Activated naive CD8-positive, alpha-beta T cell treated with anti-CD3 and anti-CD28 coated beads, Interleukin-2, amount 10 ng/mL, durations not matched to agents 7 days and 5 days (primary cell): ENCODE measurements at regions of chr17 and their contacts with region 1.

Region 1: DNA sequence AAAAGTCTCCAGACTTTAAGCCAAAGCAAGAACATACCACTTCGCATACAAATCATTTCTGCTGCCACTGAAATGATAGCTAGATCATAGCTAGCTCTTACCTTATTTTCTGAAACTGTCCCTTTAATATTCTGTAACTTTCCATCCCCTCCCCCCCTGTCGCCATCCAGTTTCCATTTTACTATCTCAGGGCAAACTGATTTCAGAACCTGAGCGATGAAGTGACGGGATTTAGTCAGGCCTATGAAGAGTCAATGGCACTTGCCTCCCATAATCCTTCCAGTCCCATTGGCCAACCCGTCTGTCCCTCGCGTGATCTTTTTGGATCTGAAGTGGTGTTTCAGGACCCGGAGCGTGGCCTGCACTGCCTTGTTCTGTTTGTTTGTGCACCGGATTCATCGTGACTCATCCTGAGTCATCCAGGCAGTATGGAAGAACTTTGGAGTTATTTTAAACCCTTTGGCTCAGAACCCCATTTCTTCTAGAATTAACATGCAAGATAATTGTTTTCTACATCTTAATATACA is 199.8 kb upstream of the CHMP6 start:
- DNase-seq: no peak
- ATAC-seq: no peak
- H3K4me3 Mint-ChIP-seq: peak overlapping the region; percentile 76
- H3K27ac Mint-ChIP-seq: peak overlapping the region; percentile 97
- H3K4me1 Mint-ChIP-seq: peaks cover 56% of the 10 kb centered on the region
- H3K27me3 Mint-ChIP-seq: no peaks in the 10 kb centered on the region

Region 2: DNA sequence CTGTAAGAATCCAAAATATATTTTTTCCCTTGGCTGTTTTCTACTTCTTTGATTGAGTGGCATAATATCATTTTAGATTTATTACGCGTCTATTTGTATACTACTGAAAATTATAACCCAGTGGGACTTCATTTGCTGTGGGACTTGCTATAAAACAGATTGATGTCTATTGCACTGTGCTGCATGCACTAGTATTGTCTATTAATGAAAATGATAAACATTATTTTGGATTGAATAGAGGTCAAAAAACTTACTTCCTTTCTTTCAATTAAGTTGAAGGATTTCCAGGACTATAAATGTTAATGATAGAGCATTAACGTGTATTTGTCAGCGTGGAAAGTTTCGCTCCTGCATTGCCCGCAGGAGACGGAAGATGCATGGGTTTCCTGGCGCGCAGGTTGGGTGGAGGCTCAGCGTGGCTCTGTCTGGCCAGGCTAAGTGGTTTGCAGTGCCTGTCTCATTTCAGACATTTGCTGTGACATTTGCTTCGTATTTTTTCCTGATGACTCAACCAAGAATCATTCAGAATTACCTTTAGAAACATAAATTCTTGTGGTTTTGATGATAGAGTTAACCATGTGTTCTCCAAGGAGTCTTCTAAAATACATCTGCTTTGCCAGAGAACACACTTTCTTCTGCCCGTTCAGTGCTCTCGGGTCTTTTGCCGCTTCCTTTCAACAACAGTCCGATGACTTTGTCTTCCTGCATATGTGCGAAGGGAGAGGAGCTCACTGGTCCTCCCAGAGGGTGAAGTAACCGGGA is 30.5 kb before region 1 on chr17:
- POLR2A ChIA-PET with region 1: interaction called, 16 read pairs
- DNase-seq: no peak
- ATAC-seq: peak; percentile 79
- H3K4me3 Mint-ChIP-seq: peak overlapping the region; percentile 76
- H3K27ac Mint-ChIP-seq: peak overlapping the region; percentile 98
- H3K4me1 Mint-ChIP-seq: peaks cover 66% of the 10 kb centered on the region
- H3K27me3 Mint-ChIP-seq: no peaks in the 10 kb centered on the region

Region 3: DNA sequence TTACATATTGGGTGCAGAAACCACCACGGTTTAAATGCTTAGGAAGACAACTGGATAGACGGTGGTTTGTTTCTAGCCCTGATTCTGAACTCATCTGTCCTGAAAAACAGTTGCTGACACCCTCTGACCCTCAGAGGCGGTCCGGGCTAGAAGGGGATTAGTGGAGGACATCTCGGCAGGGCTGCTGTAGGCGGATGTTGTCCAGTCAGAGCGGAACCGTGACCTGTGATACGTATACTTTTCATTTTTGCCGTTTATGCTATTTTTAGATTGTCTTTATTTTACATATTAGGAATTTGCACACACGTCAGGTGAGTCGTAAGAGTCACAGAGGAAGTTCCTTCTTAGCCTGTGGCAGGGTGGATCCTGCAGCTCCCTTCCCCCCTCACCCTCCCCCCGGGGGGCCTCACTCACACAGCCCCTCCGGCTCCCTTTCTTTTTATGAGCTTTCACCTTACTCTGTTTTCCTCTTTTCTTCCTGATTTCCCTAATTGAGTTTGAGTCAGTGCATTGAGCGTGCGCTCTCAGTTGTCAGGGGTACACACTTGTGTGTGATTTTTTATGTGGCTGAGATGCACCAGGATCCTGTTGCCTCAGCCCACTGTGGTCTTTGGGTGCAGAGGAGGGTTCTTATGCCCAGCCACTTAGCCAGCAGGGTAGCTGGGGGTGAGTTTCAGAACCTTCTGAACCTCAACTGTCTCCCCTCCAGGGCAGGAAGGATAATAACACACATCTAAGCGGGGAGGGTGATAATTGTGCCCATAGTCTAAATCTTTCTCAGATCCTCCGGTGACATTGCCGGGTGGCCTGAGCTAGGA is 11.2 kb before region 1 on chr17:
- POLR2A ChIA-PET with region 1: interaction called, 84 read pairs
- DNase-seq: peak; percentile 64
- ATAC-seq: peak; percentile 64
- H3K4me3 Mint-ChIP-seq: peak overlapping the region; percentile 74
- H3K27ac Mint-ChIP-seq: peak overlapping the region; percentile 96
- H3K4me1 Mint-ChIP-seq: peaks cover 63% of the 10 kb centered on the region
- H3K27me3 Mint-ChIP-seq: no peaks in the 10 kb centered on the region

Region 4: GRCh38 chr17:80805032-80805751 is 13.4 kb after region 1 on chr17:
- POLR2A ChIA-PET with region 1: no interaction called
- DNase-seq: no peak
- ATAC-seq: no peak
- H3K4me3 Mint-ChIP-seq: no peak overlapping the region
- H3K27ac Mint-ChIP-seq: no peak overlapping the region
- H3K4me1 Mint-ChIP-seq: peaks cover 9% of the 10 kb centered on the region
- H3K27me3 Mint-ChIP-seq: no peaks in the 10 kb centered on the region

Region 5: DNA sequence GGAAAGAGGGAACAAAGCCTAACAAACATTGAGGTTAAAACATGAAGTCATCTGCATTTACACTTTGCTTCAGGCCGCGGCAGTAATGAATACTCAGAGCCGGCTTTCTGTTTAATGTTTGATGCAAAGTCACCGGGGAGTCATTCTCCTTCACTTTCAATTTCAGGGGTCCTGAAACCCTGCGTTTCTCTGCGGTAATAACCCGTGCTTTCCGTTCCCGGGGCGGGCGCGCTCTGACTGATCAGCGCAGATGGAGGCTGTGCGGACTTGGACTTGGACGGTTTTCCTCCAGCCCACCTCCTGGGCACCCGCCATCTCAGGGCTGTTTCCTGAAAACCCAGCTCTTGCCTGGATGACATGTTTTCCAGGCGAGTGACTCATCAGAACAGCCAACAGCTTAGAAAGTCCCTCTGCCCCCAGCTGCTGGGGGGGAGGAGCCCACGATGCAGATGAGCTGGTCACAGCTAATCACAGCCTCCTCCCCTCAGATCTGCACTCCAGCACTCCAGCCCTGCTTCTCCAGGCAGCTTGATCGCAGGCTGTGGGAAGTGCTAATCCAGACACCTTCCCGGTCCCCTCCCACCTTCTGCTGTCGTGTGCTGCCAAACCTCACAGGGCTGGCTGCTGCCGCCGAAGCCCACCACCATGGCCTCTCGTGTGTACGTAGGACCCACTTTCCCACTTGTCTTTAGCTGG is 41.2 kb after region 1 on chr17:
- POLR2A ChIA-PET with region 1: interaction called, 22 read pairs
- DNase-seq: peak; percentile 82
- ATAC-seq: peak; percentile 92
- H3K4me3 Mint-ChIP-seq: peak overlapping the region; percentile 68
- H3K27ac Mint-ChIP-seq: peak overlapping the region; percentile 86
- H3K4me1 Mint-ChIP-seq: peaks cover 31% of the 10 kb centered on the region
- H3K27me3 Mint-ChIP-seq: no peaks in the 10 kb centered on the region

Region 6: GRCh38 chr17:80855948-80856862 is 64.4 kb after region 1 on chr17:
- POLR2A ChIA-PET with region 1: interaction called, 20 read pairs
- DNase-seq: peak; percentile 76
- ATAC-seq: peak; percentile 98
- H3K4me3 Mint-ChIP-seq: peak overlapping the region; percentile 47
- H3K27ac Mint-ChIP-seq: peak overlapping the region; percentile 94
- H3K4me1 Mint-ChIP-seq: peaks cover 57% of the 10 kb centered on the region
- H3K27me3 Mint-ChIP-seq: no peaks in the 10 kb centered on the region

Region 7: DNA sequence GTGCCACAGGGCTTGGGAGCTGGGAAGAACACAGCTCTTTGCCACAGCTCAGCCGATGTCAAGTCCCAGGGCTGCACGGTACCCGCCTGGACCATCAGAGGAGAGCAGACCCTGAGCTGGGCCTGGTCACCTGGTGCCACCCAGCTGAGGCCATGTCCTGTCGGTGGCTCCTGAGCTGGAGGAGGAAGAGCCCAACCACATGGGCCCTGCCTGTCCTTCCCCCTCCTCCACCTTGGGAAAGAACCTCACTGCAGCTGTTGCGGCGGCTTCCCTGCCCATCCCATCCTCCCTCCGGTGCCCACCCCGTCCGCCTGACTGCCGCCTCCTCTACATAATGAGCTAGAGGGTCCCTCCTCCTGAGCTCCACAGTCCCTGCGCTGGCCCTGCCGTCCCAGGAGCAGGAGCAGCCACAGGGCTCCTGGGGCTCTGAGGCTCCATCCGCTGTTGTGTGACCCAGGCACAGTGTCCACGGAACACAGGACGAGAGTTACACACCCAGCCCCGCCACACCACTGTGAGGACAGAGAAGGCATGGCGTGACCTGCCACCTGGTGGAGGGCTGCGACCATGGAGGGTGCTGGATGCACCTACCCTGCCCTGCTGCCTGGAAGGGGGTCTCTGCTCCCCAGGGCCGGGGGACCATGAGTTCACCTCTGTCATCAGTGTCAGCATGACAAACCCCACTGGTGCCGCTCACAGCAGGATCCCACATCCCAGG is 178.4 kb after region 1 on chr17:
- POLR2A ChIA-PET with region 1: no interaction called
- DNase-seq: peak; percentile 73
- ATAC-seq: peak; percentile 69
- H3K4me3 Mint-ChIP-seq: peak overlapping the region; percentile 22
- H3K27ac Mint-ChIP-seq: peak overlapping the region; percentile 84
- H3K4me1 Mint-ChIP-seq: peaks cover 4% of the 10 kb centered on the region
- H3K27me3 Mint-ChIP-seq: peaks cover 8% of the 10 kb centered on the region